ENCODE measurements at regions of chr16 and their contacts with region 1.

Region 1: GRCh38 chr16:57013229-57013628 is 23.9 kb downstream of the NLRC5 start:
- DNase-seq: no peak
- H3K4me3 ChIP-seq: peak overlapping the region; percentile 11
- H3K4me3 Mint-ChIP-seq: peak overlapping the region; percentile 51 to 87 (median 67)
- H3K27ac ChIP-seq: no peak overlapping the region
- H3K27ac Mint-ChIP-seq: peak overlapping the region; percentile 48 to 97 (median 91)
- H3K4me1 ChIP-seq: peaks cover 92% of the 10 kb centered on the region
- H3K4me1 Mint-ChIP-seq: peaks cover 76 to 92% (median 86%) of the 10 kb centered on the region in 3 donors
- H3K27me3 ChIP-seq: no peaks in the 10 kb centered on the region
- H3K27me3 Mint-ChIP-seq: no peaks in the 10 kb centered on the region

Region 2: GRCh38 chr16:57000271-57001025 is 12.8 kb before region 1 on chr16:
- CTCF ChIA-PET with region 1: interaction called, 9 read pairs
- POLR2A ChIA-PET with region 1: interaction called, 17 read pairs
- DNase-seq: peak in 3 of 5 donors; percentile 39 to 74 (median 39)
- H3K4me3 ChIP-seq: peak overlapping the region; percentile 52
- H3K4me3 Mint-ChIP-seq: peak overlapping the region; percentile 74 to 87 (median 79)
- H3K27ac ChIP-seq: peak overlapping the region; percentile 71
- H3K27ac Mint-ChIP-seq: peak overlapping the region; percentile 90 to 99 (median 96)
- H3K4me1 ChIP-seq: peaks cover 94% of the 10 kb centered on the region
- H3K4me1 Mint-ChIP-seq: peaks cover 97 to 100% (median 99%) of the 10 kb centered on the region in 3 donors
- H3K27me3 ChIP-seq: no peaks in the 10 kb centered on the region
- H3K27me3 Mint-ChIP-seq: no peaks in the 10 kb centered on the region

Region 3: GRCh38 chr16:57023541-57024249 is 10.5 kb after region 1 on chr16:
- CTCF ChIA-PET with region 1: interaction called, 16 read pairs
- POLR2A ChIA-PET with region 1: interaction called, 9 read pairs
- DNase-seq: peak; percentile 57 to 91 (median 86)
- H3K4me3 ChIP-seq: peak overlapping the region; percentile 36
- H3K4me3 Mint-ChIP-seq: peak overlapping the region; percentile 60 to 89 (median 76)
- H3K27ac ChIP-seq: no peak overlapping the region
- H3K27ac Mint-ChIP-seq: peak overlapping the region; percentile 79 to 94 (median 92)
- H3K4me1 ChIP-seq: peaks cover 87% of the 10 kb centered on the region
- H3K4me1 Mint-ChIP-seq: peaks cover 87 to 95% (median 94%) of the 10 kb centered on the region in 3 donors
- H3K27me3 ChIP-seq: no peaks in the 10 kb centered on the region
- H3K27me3 Mint-ChIP-seq: peaks cover 0 to 1% of the 10 kb centered on the region in 2 donors

Region 4: GRCh38 chr16:57045694-57046381 is 32.6 kb after region 1 on chr16:
- CTCF ChIA-PET with region 1: interaction called, 32 read pairs
- POLR2A ChIA-PET with region 1: interaction called, 11 read pairs
- DNase-seq: peak in 3 of 5 donors; percentile 38 to 76 (median 48)
- H3K4me3 ChIP-seq: no peak overlapping the region
- H3K4me3 Mint-ChIP-seq: peak overlapping the region in 4 of 7 donors; percentile 15 to 54 (median 16)
- H3K27ac ChIP-seq: no peak overlapping the region
- H3K27ac Mint-ChIP-seq: peak overlapping the region; percentile 85 to 96 (median 90)
- H3K4me1 ChIP-seq: peaks cover 49% of the 10 kb centered on the region
- H3K4me1 Mint-ChIP-seq: peaks cover 41 to 67% (median 44%) of the 10 kb centered on the region in 3 donors
- H3K27me3 ChIP-seq: no peaks in the 10 kb centered on the region
- H3K27me3 Mint-ChIP-seq: peaks cover 0 to 1% of the 10 kb centered on the region in 2 donors

Region 5: GRCh38 chr16:57071831-57072582 is 58.8 kb after region 1 on chr16:
- CTCF ChIA-PET with region 1: no interaction called
- POLR2A ChIA-PET with region 1: no interaction called
- DNase-seq: no peak
- H3K4me3 ChIP-seq: no peak overlapping the region
- H3K4me3 Mint-ChIP-seq: no peak overlapping the region
- H3K27ac ChIP-seq: no peak overlapping the region
- H3K27ac Mint-ChIP-seq: peak overlapping the region; percentile 58 to 91 (median 72)
- H3K4me1 ChIP-seq: peaks cover 12% of the 10 kb centered on the region
- H3K4me1 Mint-ChIP-seq: peaks cover 12 to 29% (median 29%) of the 10 kb centered on the region in 3 donors
- H3K27me3 ChIP-seq: no peaks in the 10 kb centered on the region
- H3K27me3 Mint-ChIP-seq: peaks cover 0 to 3% of the 10 kb centered on the region in 2 donors